Panc1 (cell line): ENCODE measurements at regions of chr7 and their contacts with region 1.

Region 1: DNA sequence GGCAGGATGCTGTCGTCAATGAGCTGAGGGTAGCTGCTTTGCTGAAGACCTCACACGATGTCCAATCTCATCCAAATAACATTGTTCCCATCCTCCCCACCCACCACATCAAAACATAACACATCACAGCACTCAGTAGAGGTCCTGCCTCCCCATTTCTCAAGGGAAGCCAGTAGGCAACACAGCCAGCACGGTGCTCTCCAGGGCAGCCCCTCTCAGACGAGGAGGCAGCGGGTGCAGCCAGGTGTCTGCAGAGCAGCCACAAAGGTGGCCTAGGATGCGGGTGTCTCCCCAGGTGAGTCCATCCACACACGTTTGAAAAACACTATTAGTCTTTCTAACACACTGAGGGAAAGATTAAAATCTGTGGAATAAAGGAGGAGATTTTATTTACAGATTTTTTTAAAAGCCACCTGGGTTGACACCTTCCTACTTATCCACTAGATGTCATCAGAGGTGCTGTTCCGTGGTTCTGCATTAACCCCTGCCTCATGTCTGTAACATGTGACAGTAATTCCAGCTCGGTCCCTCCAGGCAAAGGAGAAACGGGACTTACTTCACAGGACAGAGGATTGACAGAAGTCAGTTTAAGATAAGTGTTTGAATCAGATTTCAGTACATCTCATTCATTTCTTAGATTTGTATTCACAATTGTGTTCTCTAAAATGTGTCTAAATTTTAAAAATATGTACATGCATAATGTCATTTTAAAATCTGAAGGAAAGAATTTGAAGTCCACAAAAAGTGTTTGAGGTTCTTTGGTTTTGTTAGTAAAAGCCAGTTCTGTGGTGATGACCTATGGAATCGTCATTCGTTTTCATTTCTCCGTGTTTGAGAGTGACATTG is 68.0 kb downstream of the LANCL2 start:
- DNase-seq: peak; percentile 42
- ATAC-seq: peak; percentile 70
- H3K4me3 ChIP-seq: no peak overlapping the region
- H3K27ac ChIP-seq: no peak overlapping the region
- H3K4me1 ChIP-seq: no peaks in the 10 kb centered on the region
- H3K27me3 ChIP-seq: no peaks in the 10 kb centered on the region
- CTCF ChIP-seq: peak; percentile 76; the same call in 1 of the 2 replicates

Region 2: GRCh38 chr7:55420530-55420929 is 12.6 kb before region 1 on chr7:
- CTCF ChIA-PET with region 1: no interaction called
- POLR2A ChIA-PET with region 1: interaction called, 14 read pairs
- in situ Hi-C with region 1: no loop called
- intact Hi-C with region 1: no loop called
- DNase-seq: no peak
- ATAC-seq: peak; percentile 80; the same call in 1 of the 2 replicates
- H3K4me3 ChIP-seq: no peak overlapping the region
- H3K27ac ChIP-seq: no peak overlapping the region
- H3K4me1 ChIP-seq: peaks cover 9% of the 10 kb centered on the region
- H3K27me3 ChIP-seq: no peaks in the 10 kb centered on the region
- CTCF ChIP-seq: no peak

Region 3: GRCh38 chr7:55593515-55594318 is 160.6 kb after region 1 on chr7:
- CTCF ChIA-PET with region 1: interaction called, 3 read pairs
- POLR2A ChIA-PET with region 1: no interaction called
- in situ Hi-C with region 1: no loop called
- intact Hi-C with region 1: loop called (anchors 10 kb)
- DNase-seq: peak; percentile 69
- ATAC-seq: peak; percentile 91
- H3K4me3 ChIP-seq: no peak overlapping the region
- H3K27ac ChIP-seq: no peak overlapping the region
- H3K4me1 ChIP-seq: no peaks in the 10 kb centered on the region
- H3K27me3 ChIP-seq: peaks cover 4% of the 10 kb centered on the region; the same call in 1 of the 2 replicates
- CTCF ChIP-seq: peak; percentile 99